ENCODE measurements at regions of chr1 and their contacts with region 1.

Region 1: GRCh38 chr1:21294266-21294989 is 4.2 kb upstream of the ECE1 start:
- DNase-seq: peak; percentile 93
- H3K4me3 Mint-ChIP-seq: peak overlapping the region; percentile 80
- H3K27ac Mint-ChIP-seq: peak overlapping the region; percentile 98
- H3K4me1 Mint-ChIP-seq: peaks cover 86% of the 10 kb centered on the region
- H3K27me3 Mint-ChIP-seq: no peaks in the 10 kb centered on the region

Region 2: GRCh38 chr1:20981915-20982314 is 312.5 kb before region 1 on chr1:
- CTCF ChIA-PET with region 1: no interaction called
- POLR2A ChIA-PET with region 1: no interaction called
- DNase-seq: no peak
- H3K4me3 Mint-ChIP-seq: no peak overlapping the region
- H3K27ac Mint-ChIP-seq: no peak overlapping the region
- H3K4me1 Mint-ChIP-seq: no peaks in the 10 kb centered on the region
- H3K27me3 Mint-ChIP-seq: no peaks in the 10 kb centered on the region

Region 3: GRCh38 chr1:21270086-21270689 is 24.2 kb before region 1 on chr1:
- CTCF ChIA-PET with region 1: interaction called, 10 read pairs
- POLR2A ChIA-PET with region 1: no interaction called
- DNase-seq: peak; percentile 85
- H3K4me3 Mint-ChIP-seq: no peak overlapping the region
- H3K27ac Mint-ChIP-seq: peak overlapping the region; percentile 76
- H3K4me1 Mint-ChIP-seq: peaks cover 22% of the 10 kb centered on the region
- H3K27me3 Mint-ChIP-seq: no peaks in the 10 kb centered on the region

Region 4: DNA sequence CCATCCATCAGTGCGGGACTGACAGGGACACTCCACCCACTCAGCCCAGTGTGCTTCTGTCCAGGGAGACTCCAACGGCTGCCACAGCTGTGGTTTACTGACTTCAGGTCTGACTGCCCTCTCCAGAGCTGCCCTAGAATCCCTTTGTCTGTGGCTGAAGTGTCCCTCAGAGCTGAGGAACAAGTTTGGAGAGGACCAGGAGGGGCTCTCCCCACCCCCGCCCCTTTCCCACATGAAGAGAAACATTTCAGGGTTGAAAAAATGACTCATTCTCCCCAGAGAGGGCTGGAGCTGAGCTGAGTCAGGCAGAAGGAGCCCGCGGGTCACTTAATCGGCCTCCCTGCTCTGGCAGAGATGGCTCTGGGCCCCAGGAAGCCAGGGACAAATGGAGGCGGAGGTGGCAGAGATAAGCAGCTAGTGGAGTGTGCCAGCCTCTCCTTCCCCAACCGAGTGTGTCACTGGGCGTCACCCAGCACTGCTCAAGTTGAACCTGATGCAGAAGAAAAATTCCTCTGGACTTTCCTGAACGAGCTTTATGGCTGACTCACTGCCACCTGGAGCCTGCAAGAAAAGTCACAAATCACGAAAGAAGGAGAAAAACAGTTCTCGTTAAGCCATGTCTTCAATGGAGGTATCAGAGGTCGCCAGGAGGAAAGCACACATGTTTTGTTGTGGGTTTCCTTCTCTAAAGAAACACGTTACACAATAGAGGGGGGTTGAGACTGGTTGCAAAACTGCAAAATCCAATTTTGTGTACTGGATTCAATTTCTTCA is 30.1 kb after region 1 on chr1:
- CTCF ChIA-PET with region 1: interaction called, 13 read pairs
- POLR2A ChIA-PET with region 1: interaction called, 3 read pairs
- DNase-seq: peak; percentile 50
- H3K4me3 Mint-ChIP-seq: peak overlapping the region; percentile 47
- H3K27ac Mint-ChIP-seq: peak overlapping the region; percentile 92
- H3K4me1 Mint-ChIP-seq: peaks cover 79% of the 10 kb centered on the region
- H3K27me3 Mint-ChIP-seq: no peaks in the 10 kb centered on the region

Region 5: DNA sequence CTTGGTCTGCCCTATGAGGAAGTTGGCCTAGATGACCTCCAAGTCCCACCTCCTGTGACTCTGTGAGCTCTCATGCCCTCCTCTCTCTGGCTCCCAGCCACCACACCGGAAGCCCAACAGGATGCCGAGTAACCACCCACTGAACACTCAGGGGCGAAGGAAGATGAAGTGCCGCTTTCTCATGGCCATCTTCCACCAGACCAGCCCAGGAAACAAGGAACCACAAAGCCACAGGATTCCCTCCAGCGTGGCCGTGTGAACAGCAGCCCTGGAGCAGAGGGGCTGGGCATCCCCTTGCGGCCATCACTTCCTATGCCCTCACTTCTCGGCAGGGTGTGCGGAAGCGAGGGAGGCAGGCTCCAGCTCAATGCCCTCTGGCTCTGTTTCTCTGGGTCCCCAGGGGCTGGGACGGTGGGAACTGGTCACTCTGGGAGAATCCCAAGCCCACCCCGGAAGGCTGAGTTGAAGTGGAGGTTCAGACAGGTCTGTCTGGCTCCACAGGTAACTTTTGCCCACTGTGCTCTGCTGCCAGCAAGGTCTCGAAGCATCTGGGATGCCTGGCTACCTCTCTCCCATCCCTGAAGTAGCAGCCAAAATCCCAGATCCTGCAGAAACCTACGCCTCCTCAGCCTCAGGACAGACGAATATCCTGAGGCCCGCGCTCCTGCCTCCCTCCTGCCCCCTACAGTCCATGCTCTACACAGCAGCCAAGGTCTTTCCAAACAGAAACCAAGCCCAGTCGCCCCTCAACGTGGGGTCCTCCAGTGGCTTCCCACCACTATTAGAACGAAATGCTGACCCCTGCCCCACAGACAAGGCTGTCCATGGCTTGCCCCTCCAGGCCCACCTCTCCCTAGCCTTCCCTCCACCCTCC is 40.0 kb after region 1 on chr1:
- CTCF ChIA-PET with region 1: interaction called, 23 read pairs
- POLR2A ChIA-PET with region 1: interaction called, 3 read pairs
- DNase-seq: peak; percentile 90
- H3K4me3 Mint-ChIP-seq: peak overlapping the region; percentile 75
- H3K27ac Mint-ChIP-seq: peak overlapping the region; percentile 93
- H3K4me1 Mint-ChIP-seq: peaks cover 91% of the 10 kb centered on the region
- H3K27me3 Mint-ChIP-seq: no peaks in the 10 kb centered on the region

Region 6: DNA sequence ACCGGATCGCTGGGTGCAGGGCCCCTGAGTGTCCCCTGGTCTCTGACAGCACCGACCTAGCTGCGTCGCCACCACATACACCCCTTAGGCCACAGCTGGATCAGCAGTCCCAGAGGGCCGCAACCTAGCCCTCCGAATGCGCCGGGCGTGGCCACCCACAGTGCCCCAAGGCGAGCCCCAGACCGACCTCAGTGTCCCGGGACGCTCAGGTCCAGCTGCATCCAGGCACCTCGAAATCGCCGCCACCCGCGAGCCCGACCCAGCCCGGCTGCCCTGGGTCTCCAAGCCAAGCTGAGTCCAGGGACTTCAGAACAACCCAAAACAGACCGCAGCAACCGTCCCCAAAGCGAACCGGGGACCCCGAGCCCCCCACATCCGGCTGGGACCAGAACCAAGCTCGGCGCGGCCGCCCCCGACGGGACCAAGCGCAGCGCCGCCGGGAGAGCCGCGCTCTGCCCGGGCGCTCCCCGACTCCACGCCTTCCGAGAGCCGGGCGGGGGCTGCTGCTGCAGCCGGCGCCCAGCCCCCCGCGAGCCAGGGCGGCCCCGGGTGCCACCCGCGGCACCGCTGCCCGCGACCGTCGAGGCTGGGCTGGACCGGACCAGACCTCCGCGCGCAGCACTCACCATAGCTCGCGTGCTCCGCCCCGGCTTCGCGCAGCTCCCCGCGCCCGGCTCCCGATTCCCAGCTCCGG is 50.5 kb after region 1 on chr1:
- CTCF ChIA-PET with region 1: interaction called, 5 read pairs
- POLR2A ChIA-PET with region 1: interaction called, 12 read pairs
- DNase-seq: no peak
- H3K4me3 Mint-ChIP-seq: peak overlapping the region; percentile 85
- H3K27ac Mint-ChIP-seq: peak overlapping the region; percentile 94
- H3K4me1 Mint-ChIP-seq: peaks cover 40% of the 10 kb centered on the region
- H3K27me3 Mint-ChIP-seq: no peaks in the 10 kb centered on the region